ENCODE measurements at regions of chr22 and their contacts with region 1.

Region 1: GRCh38 chr22:21641789-21642583 is at the start of gene SDF2L1:
- DNase-seq: peak; percentile 97 to 99 (median 98)
- H3K4me3 ChIP-seq: peak within 1 kb of the TSS; percentile 86
- H3K4me3 Mint-ChIP-seq: peak within 1 kb of the TSS; percentile 77 to 91 (median 87)
- H3K27ac ChIP-seq: peak within 1 kb of the TSS; percentile 96
- H3K27ac Mint-ChIP-seq: peak within 1 kb of the TSS; percentile 44 to 99 (median 90)
- H3K4me1 ChIP-seq: peaks cover 25% of the 10 kb centered on the region
- H3K4me1 Mint-ChIP-seq: peaks cover 31 to 33% (median 31%) of the 10 kb centered on the region in 3 donors
- H3K27me3 ChIP-seq: no peaks in the 10 kb centered on the region
- H3K27me3 Mint-ChIP-seq: no peaks in the 10 kb centered on the region
- total RNA-seq, gene SDF2L1: 71.5 to 74.7 TPM

Region 2: GRCh38 chr22:21629262-21630149 is 12.5 kb before region 1 on chr22 and contains the start of gene YDJC:
- CTCF ChIA-PET with region 1: interaction called, 99 read pairs
- POLR2A ChIA-PET with region 1: interaction called, 76 read pairs
- DNase-seq: peak; percentile 91 to 95 (median 93)
- H3K4me3 ChIP-seq: peak within 1 kb of the TSS; percentile 90
- H3K4me3 Mint-ChIP-seq: peak within 1 kb of the TSS; percentile 92 to 99 (median 94)
- H3K27ac ChIP-seq: peak within 1 kb of the TSS; percentile 98
- H3K27ac Mint-ChIP-seq: peak within 1 kb of the TSS; percentile 88 to 96 (median 92)
- H3K4me1 ChIP-seq: peaks cover 48% of the 10 kb centered on the region
- H3K4me1 Mint-ChIP-seq: peaks cover 32 to 56% (median 38%) of the 10 kb centered on the region in 3 donors
- H3K27me3 ChIP-seq: no peaks in the 10 kb centered on the region
- H3K27me3 Mint-ChIP-seq: no peaks in the 10 kb centered on the region
- total RNA-seq, gene YDJC: 75.2 to 79.0 TPM

Region 3: DNA sequence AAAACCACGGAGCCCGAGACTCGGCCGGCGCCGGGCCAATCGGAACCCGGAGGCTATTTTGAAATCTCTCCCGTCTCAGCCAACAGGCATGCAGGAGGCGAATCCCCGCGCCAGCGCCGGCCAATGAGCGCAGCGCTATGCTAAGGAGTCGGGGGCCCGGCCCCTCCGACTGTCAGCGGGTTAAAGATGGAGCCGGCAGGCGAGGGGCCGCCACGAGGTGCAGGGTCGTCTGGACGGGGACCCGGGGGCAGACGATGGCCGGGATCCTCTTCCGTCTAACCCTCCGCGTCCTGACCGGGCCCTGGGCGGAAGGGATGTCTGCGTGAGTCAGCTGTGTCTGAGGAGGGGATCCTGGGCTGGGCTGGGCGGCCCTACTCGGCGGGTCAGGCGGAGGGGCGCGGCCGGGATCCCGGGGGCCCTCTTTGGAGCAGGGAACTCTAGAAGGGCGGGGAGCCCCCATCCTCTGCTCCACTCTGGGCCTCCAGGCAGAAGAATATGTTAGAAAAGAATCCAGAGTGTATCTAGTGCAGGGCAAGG is 10.1 kb after region 1 on chr22:
- CTCF ChIA-PET with region 1: interaction called, 35 read pairs
- POLR2A ChIA-PET with region 1: interaction called, 13 read pairs
- DNase-seq: peak; percentile 70 to 82 (median 77)
- H3K4me3 ChIP-seq: peak overlapping the region; percentile 70
- H3K4me3 Mint-ChIP-seq: peak overlapping the region; percentile 81 to 94 (median 88)
- H3K27ac ChIP-seq: peak overlapping the region; percentile 84
- H3K27ac Mint-ChIP-seq: peak overlapping the region in 3 of 8 donors; percentile 60 to 84 (median 73)
- H3K4me1 ChIP-seq: peaks cover 21% of the 10 kb centered on the region
- H3K4me1 Mint-ChIP-seq: peaks cover 23 to 38% (median 28%) of the 10 kb centered on the region in 3 donors
- H3K27me3 ChIP-seq: no peaks in the 10 kb centered on the region
- H3K27me3 Mint-ChIP-seq: no peaks in the 10 kb centered on the region

Region 4: DNA sequence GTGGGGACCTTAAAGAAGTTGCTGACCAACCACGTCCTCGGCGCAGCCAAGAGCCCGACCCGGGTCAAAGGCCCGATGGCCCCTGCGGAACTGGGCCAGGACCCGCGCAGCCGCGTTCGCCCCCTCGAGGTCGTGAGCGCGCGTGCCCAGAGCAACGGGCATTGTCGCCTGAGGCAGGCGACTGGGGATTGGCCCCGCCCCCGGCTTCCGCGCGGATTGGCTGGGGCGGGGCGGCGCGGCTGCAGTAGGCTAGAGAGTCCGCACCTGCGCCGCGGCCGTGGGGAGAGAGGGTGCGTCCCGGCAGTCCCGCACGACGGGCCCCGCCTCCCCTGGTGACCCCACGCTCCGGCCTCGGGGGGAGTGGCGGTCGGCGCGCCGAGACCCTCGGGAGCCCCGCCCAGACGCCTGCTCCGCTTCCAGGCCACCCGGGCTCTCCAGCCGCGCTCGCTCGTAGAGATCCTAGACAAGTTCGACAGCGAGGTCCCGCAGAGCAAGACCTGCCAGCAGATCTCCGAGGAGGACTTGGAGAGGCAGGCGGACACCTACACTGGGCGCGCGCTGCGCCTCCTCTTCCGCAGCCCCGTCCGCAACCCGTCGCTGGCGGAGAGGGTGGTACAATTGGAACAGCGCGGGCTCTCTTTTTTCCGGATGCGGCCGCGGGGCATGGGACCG is 15.5 kb after region 1 on chr22:
- CTCF ChIA-PET with region 1: interaction called, 16 read pairs
- POLR2A ChIA-PET with region 1: interaction called, 13 read pairs
- DNase-seq: peak; percentile 73 to 84 (median 80)
- H3K4me3 ChIP-seq: peak overlapping the region; percentile 70
- H3K4me3 Mint-ChIP-seq: peak overlapping the region; percentile 80 to 94 (median 86)
- H3K27ac ChIP-seq: peak overlapping the region; percentile 68
- H3K27ac Mint-ChIP-seq: peak overlapping the region in 4 of 8 donors; percentile 23 to 71 (median 57)
- H3K4me1 ChIP-seq: peaks cover 15% of the 10 kb centered on the region
- H3K4me1 Mint-ChIP-seq: peaks cover 11 to 21% (median 13%) of the 10 kb centered on the region in 3 donors
- H3K27me3 ChIP-seq: no peaks in the 10 kb centered on the region
- H3K27me3 Mint-ChIP-seq: no peaks in the 10 kb centered on the region

Region 5: DNA sequence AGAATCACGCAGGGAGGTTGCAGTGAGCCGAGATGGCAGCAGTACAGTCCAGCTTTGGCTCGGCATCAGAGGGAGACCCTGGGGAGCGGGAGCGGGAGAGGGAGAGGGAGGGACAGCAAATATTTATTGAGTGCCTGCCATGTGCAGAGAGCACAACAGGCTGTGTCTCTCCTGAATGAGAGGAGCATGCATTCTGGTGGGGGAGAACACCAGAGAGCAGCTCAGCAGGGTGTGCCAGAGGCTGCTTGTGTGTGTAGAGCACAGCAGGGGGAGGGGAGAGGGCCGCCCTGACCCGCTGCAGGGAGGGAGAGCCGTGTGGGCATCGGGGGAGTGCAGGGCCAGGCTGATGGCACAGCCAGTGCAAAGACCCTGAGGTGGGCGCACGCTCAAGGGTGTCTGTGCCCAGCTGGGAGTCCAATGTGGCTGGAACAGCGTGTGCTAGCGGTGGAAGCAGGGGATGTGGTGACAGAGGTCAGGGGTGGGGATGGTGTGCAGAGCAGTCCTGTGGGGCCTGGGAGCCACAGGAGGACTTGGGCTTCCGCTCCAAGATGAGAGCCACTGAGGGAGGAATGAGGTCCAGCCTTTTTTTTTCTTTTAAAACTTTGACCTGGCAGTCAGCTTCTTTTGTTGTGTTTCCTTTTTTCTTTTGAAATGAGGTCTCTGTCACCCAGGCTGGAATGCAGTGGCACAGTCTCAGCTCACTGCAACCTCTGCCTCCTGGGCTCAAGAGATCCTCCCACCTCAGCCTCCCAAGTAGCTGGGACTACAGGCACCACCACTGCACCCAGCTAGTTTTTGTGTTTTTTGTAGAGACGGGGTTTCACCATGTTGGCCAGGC is 35.8 kb after region 1 on chr22:
- CTCF ChIA-PET with region 1: no interaction called
- POLR2A ChIA-PET with region 1: no interaction called
- DNase-seq: no peak
- H3K4me3 ChIP-seq: no peak overlapping the region
- H3K4me3 Mint-ChIP-seq: no peak overlapping the region
- H3K27ac ChIP-seq: no peak overlapping the region
- H3K27ac Mint-ChIP-seq: peak overlapping the region in 2 of 8 donors; percentile 73 to 81
- H3K4me1 ChIP-seq: no peaks in the 10 kb centered on the region
- H3K4me1 Mint-ChIP-seq: peaks cover 0 to 3% (median 0%) of the 10 kb centered on the region in 3 donors
- H3K27me3 ChIP-seq: no peaks in the 10 kb centered on the region
- H3K27me3 Mint-ChIP-seq: no peaks in the 10 kb centered on the region

Region 6: DNA sequence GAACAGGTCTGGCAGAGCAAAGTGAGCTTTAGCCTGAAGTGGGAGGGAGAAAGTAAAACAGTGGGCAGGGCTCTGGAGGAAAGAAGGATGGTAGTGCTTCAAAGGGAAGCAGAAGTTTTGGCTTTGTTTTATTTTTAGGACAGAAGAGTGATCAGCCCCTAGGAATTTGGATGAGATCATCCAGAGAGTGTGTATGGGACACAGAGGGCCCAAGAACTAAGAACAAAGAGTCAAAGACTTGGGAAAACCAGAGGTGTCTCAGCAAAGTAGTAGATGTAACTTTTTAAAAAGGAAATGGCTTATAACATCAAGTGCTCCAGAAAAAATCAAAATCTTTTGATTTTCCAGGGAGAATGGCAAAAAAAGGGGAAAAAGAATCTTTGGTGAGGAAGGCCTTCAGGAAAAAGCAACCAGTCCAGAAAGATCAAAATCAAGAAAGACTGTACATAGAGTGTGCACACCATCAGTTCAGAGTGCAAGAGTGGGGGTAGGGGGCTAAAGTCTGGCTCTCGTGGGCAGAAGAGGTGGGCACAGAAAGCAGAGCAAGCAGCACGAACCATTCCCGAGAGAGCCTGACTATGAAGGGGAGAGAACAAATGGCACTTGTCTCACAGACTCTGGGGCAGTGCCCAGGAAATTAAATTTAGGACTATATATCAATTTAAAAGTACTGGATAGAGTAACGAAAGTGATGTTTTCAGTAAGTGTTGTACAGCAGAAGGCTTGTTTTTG is 195.4 kb after region 1 on chr22:
- CTCF ChIA-PET with region 1: no interaction called
- POLR2A ChIA-PET with region 1: no interaction called
- DNase-seq: no peak
- H3K4me3 ChIP-seq: no peak overlapping the region
- H3K4me3 Mint-ChIP-seq: peak overlapping the region in 2 of 7 donors; percentile 10 to 12
- H3K27ac ChIP-seq: peak overlapping the region; percentile 3
- H3K27ac Mint-ChIP-seq: peak overlapping the region in 7 of 8 donors; percentile 17 to 76 (median 48)
- H3K4me1 ChIP-seq: peaks cover 34% of the 10 kb centered on the region
- H3K4me1 Mint-ChIP-seq: peaks cover 54 to 74% (median 72%) of the 10 kb centered on the region in 3 donors
- H3K27me3 ChIP-seq: no peaks in the 10 kb centered on the region
- H3K27me3 Mint-ChIP-seq: no peaks in the 10 kb centered on the region